Ovary (tissue), 10 donors: ENCODE measurements at regions of chr15 and their contacts with region 1.

Region 1: DNA sequence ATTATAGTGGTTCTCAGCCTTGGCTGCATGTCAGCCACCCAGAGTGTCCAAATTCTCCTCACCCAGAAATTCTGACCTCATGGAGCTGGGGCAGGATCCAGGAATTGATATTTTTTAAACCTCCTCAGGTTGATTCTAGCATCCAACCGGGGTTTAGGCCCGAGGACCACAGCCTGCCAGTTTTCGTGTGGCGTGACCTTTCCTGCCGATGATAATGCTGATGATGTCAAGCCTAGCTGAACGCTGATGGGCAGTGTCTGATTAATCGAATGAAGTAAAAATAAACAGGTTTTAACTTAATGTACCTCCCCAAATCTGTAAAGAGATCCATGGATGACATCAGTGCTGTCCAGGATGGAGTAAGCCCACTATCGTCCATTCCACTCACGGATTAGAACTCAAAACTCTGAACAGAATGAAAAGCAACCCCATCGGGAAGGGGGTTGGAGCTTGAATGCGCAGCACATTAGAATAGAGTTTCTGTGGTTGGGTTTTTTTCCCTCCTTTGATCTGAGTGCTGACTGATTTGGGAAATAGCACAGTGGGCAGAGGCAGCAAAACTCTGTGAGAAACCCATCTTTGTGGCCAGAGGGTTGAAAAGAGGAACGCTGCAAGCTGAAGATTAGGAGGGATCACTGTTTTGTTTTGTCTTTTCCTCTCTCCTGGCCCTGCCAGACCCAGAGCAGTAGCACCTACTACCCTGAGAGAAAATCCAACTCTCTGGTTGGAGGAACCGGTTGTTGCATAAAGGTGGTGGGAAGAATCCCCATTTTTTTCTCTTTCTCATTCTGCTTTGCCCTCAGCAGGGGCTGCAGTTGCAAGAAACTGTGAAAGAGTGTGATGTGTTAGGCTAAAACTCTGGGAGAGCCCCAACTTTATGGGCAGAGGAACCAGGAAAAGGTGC is 153.9 kb downstream of the APBA2 start:
- DNase-seq: no peak
- H3K4me3 ChIP-seq: no peak overlapping the region
- H3K27ac ChIP-seq: no peak overlapping the region
- H3K4me1 ChIP-seq: no peaks in the 10 kb centered on the region
- H3K27me3 ChIP-seq: no peaks in the 10 kb centered on the region
- CTCF ChIP-seq: no peak
- EP300 ChIP-seq: no peak
- POLR2A ChIP-seq: no peak

Region 2: DNA sequence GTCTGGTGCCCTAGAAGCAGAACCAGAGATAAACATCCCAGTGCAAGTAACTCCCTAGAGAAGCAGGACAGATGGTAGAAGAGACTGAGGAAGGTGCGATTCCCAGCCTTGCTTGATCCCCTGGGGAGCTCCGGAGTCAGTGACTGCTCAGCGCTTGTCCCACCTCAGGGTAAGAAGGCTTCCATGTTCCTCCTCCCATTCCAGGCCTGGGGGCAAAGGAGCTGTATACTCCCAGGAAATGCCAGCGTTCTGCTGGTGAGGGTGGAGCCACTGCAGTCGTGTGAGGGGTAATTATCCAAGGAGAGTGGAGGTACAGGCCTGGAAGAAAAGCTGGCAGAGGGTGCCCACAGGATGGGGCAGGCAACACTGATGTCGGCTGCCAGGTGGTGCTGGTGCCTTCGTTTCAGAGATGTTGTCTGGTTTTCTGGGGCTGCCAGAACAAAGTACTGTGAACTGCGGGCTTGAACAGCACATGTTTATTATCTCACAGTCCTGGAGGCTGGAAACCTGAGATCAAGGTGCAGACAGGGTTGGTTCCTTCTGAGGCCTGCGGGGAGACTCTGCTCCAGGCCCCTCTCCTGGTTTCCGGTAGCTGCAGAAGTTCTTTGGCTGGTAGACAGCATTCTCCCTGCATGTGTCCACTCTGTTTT is 166.1 kb before region 1 on chr15:
- intact Hi-C with region 1: loop called in 1 of 4 experiments (anchors 5 kb)
- DNase-seq: no peak
- H3K4me3 ChIP-seq: no peak overlapping the region
- H3K27ac ChIP-seq: no peak overlapping the region
- H3K4me1 ChIP-seq: no peaks in the 10 kb centered on the region
- H3K27me3 ChIP-seq: no peaks in the 10 kb centered on the region
- CTCF ChIP-seq: no peak
- EP300 ChIP-seq: no peak
- POLR2A ChIP-seq: no peak